ENCODE measurements at regions of chr7 and their contacts with region 1.

Region 1: DNA sequence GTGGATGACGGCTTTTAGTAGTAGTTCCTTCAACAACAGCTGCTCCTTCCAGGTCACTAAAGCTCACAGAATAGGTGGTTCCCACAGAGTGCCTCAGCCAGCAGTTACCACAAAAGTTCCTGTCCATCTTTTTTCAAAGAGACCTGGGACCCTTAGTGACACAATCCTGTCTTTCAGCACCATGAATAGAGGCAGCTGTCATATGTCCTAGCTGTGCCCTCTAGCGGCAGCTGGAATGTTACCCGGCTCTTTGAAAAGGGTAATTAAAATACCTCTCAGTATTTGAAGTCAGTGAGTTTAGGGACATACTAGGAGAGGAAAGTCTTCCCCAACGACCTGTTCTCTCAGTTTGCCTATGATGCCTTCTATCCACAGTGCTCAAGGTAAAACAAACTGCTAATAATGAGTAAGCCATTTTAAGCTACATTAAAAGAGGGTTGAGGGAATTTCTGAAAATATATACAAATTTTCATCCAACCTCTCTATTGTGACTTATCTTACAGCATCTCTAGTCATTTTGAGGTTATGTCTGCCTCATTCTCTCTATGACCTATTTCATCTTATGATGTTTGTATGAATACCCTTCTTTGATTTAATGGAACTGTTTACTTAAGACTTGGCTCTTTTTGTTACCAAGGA is 290.8 kb downstream of the NXPH1 start:
- DNase-seq: peak in 1 of 2 experiments; percentile 31
- H3K4me3 ChIP-seq: no peak overlapping the region
- H3K27ac ChIP-seq: no peak overlapping the region
- H3K4me1 ChIP-seq: no peaks in the 10 kb centered on the region
- H3K27me3 ChIP-seq: no peaks in the 10 kb centered on the region
- CTCF ChIP-seq: peak; percentile 85

Region 2: DNA sequence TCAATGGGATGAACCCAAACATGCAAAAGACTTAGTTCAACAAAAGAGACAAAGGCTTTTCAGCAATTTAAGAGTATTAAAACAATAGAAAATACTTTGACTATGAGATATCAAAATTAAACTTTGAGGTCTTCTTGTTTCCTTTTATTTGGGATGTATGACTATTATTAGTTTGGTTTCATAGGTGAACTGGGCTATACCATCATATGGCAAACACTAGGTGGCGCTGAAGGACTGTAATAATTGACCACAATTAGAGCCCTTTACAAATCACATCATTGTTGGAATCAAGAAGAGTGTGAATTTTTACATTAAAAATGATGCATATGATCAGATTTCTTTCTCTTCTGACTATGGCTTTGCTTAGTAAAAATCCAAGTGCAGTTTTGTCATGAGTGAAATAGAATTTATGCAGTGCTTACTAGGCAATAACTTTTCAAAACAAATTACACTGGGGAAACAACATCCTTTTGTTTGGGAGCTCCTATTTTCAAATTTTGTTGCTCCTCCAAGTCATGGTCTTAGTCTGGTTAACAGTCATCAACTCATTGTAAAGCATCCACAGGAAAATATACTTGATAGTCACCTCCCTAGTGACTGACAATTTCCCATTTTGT is 305.5 kb before region 1 on chr7:
- CTCF ChIA-PET with region 1: no interaction called
- POLR2A ChIA-PET with region 1: no interaction called
- intact Hi-C with region 1: loop called (anchors 5 kb)
- DNase-seq: peak; percentile 44 to 62
- H3K4me3 ChIP-seq: no peak overlapping the region
- H3K27ac ChIP-seq: no peak overlapping the region
- H3K4me1 ChIP-seq: no peaks in the 10 kb centered on the region
- H3K27me3 ChIP-seq: peaks cover 8% of the 10 kb centered on the region; the same call in 1 of the 2 replicates
- CTCF ChIP-seq: peak; percentile 90

Region 3: GRCh38 chr7:8436965-8437364 is 287.2 kb before region 1 on chr7:
- CTCF ChIA-PET with region 1: no interaction called
- POLR2A ChIA-PET with region 1: no interaction called
- intact Hi-C with region 1: loop called (anchors 1 kb)
- DNase-seq: peak in 1 of 2 experiments; percentile 66
- H3K4me3 ChIP-seq: peak overlapping the region; percentile 33; the same call in 1 of the 2 replicates
- H3K27ac ChIP-seq: no peak overlapping the region
- H3K4me1 ChIP-seq: no peaks in the 10 kb centered on the region
- H3K27me3 ChIP-seq: peaks cover 28% of the 10 kb centered on the region
- CTCF ChIP-seq: peak; percentile 89